HepG2 (cell line): ENCODE measurements at regions of chr11 and their contacts with region 1.

Region 1: DNA sequence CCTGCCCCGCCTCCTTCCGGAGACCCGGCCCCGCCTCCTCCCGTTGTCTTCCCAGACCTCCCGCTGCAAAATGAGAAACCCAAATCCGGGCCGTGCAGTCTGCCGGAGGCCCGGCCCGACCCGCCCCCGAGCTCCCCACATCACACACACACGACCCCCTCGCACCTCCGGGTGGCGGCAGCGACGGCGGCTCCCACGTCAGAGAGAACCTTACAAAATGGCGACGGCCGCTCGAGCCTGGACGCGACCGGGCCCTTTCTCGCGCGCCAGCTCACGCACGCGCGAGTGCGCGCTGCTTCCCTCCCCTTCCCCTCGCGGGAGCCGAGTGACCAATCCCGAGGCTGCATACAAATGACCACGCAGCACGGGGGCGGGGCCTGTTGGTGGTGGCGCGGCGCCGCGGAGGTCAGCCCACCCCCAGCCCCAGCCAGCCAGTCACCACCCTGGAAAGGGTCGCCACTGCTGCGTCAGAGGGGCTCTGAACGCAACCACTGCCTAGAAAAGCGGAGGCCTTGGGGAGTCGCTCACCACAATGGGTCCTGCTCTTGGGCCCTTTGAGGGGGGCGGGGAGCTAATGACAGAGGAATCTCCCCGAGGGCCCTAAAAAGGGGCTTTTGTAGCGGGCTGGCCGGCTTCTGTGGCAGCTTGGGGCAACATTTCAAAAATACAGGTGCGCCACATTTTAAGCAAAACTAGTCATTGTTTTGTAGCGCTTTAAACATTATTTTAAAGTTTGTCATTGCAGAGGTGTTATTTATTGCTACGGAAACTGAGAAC is at the start of gene RBM4B:
- DNase-seq: peak; percentile 93
- ATAC-seq: peak; percentile 96
- H3K4me3 ChIP-seq: peak within 1 kb of the TSS; percentile 60 to 83 (median 82)
- H3K27ac ChIP-seq: peak within 1 kb of the TSS; percentile 87
- H3K4me1 ChIP-seq: peaks cover 40% of the 10 kb centered on the region
- H3K27me3 ChIP-seq: no peaks in the 10 kb centered on the region; a peak in 1 of 5 replicates
- CTCF ChIP-seq: no peak
- EP300 ChIP-seq: 0 out of 4 replicates have a peak, but pooled peaks of 1 of the 2 experiments have one; percentile 7
- POLR2A ChIP-seq: peak; percentile 80 to 95
- RAD21 ChIP-seq: no peak
- total RNA-seq, gene RBM4B: 25.6 and 25.8 TPM in 2 replicates

Region 2: GRCh38 chr11:66438504-66439466 is 239.0 kb before region 1 on chr11 and contains the start of gene MRPL11:
- CTCF ChIA-PET with region 1: interaction called, 5 read pairs
- POLR2A ChIA-PET with region 1: interaction called, 18 read pairs
- in situ Hi-C with region 1: no loop called
- intact Hi-C with region 1: no loop called
- DNase-seq: peak; percentile 92
- ATAC-seq: peak; percentile 94
- H3K4me3 ChIP-seq: peak within 1 kb of the TSS; percentile 78 to 89 (median 84)
- H3K27ac ChIP-seq: peak within 1 kb of the TSS; percentile 88
- H3K4me1 ChIP-seq: peaks cover 33% of the 10 kb centered on the region
- H3K27me3 ChIP-seq: peaks cover 2 to 9% of the 10 kb centered on the region in 2 experiments; a peak in 2 of 5 replicates
- CTCF ChIP-seq: peak; percentile 90
- EP300 ChIP-seq: no peak
- POLR2A ChIP-seq: peak; percentile 67 to 78; a peak in 3 of 4 replicates
- RAD21 ChIP-seq: no peak
- total RNA-seq, gene MRPL11: 176 and 220 TPM in 2 replicates

Region 3: DNA sequence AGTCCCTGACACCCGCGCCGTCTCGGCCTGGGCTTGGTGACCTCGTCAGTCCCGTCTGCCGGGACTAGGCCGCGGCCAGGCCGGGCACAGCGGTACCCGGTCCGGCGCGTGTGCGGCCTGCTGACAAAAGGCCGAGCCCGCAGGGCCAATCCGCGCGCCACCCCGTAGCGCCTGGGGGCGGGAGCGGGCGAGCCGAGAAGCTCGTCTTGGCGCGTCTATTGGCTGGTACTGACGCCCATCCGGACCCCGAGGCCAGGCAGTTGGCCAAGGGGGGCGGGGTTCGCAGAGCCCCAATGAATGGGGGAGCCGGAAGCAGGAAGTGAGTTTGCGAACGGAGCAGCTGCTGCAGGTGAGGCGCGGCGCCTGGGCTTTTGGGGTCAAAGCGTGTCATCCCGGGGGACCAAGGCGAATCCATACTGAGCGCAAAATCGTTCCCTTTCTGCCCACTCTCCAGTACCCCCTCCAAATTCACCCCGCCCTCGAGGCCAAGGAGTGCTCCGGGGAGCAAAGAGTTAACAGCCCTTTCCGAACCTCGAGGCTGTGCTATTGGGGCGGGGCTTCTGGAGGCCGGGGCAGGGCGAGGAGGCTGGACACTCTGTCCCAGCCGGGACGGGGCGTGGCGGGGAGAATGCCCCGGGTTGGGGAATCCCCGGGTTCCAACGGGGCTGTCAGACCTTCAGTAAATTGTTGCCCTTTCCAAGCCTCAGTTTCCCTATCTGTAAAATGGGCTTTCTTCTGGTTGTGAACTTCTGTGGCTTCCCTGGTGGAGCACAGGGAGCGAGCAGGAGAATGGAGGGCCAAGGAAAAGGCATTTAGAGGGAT is 197.5 kb before region 1 on chr11 and contains the start of gene DPP3:
- CTCF ChIA-PET with region 1: no interaction called
- POLR2A ChIA-PET with region 1: interaction called, 21 read pairs
- in situ Hi-C with region 1: no loop called
- intact Hi-C with region 1: no loop called
- DNase-seq: peak; percentile 93
- ATAC-seq: peak; percentile 93
- H3K4me3 ChIP-seq: peak within 1 kb of the TSS; percentile 70 to 93 (median 92)
- H3K27ac ChIP-seq: peak within 1 kb of the TSS; percentile 87
- H3K4me1 ChIP-seq: peaks cover 50% of the 10 kb centered on the region
- H3K27me3 ChIP-seq: no peaks in the 10 kb centered on the region
- CTCF ChIP-seq: peak; percentile 18; the same call in 1 of the 2 replicates
- EP300 ChIP-seq: no peak
- POLR2A ChIP-seq: peak; percentile 85 to 93
- RAD21 ChIP-seq: no peak; the same call in 1 of the 2 replicates
- total RNA-seq, gene DPP3: 48.7 and 59.8 TPM in 2 replicates

Region 4: GRCh38 chr11:66579017-66579606 is 98.7 kb before region 1 on chr11:
- CTCF ChIA-PET with region 1: interaction called, 34 read pairs
- POLR2A ChIA-PET with region 1: interaction called, 9 read pairs
- in situ Hi-C with region 1: no loop called
- intact Hi-C with region 1: loop called (anchors 1 kb)
- DNase-seq: peak; percentile 52
- ATAC-seq: peak; percentile 93
- H3K4me3 ChIP-seq: peak overlapping the region in 1 of 3 experiments; percentile 44; a peak in 2 of 6 replicates
- H3K27ac ChIP-seq: no peak overlapping the region
- H3K4me1 ChIP-seq: peaks cover 18% of the 10 kb centered on the region
- H3K27me3 ChIP-seq: peaks cover 0 to 3% of the 10 kb centered on the region in 2 experiments; a peak in 1 of 5 replicates
- CTCF ChIP-seq: peak; percentile 95
- EP300 ChIP-seq: no peak
- POLR2A ChIP-seq: no peak
- RAD21 ChIP-seq: peak; percentile 93

Region 5: DNA sequence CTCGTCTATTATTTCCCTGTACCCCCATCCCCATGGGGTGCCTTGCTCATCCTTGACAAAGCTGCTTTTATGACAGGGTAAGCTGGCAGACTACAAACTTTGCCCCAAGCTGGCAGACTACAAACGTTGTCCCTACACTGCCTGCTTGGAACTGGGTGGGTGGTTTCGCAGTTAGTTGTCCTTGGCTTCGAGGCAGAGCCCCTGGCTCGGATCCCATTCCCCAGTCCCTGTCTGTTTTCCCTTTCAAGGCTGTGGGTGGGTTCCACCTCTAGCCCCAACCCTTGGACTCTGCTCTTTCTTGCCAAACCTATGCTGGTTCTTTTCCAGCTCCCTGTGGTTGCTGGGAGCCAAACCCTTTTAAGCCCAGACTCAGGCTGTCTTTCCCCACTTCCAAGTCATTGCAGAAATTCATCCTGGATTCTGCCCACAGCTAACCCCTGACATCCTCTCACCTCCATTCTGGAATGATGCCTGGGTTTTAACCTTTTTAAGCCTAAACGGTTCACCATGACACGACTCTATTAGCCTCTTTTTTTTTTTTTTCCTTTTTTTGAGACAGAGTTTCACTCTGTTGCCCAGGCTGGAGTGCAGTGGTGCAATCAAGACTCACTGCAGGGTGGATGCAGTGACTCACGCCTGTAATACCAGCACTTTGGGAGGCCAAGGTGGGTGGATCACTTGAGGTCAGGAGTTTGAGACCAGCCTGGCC is 70.5 kb before region 1 on chr11:
- CTCF ChIA-PET with region 1: no interaction called
- POLR2A ChIA-PET with region 1: interaction called, 11 read pairs
- in situ Hi-C with region 1: no loop called
- intact Hi-C with region 1: no loop called
- DNase-seq: peak; percentile 82
- ATAC-seq: peak; percentile 91
- H3K4me3 ChIP-seq: peak overlapping the region in 1 of 3 experiments; percentile 14; a peak in 2 of 6 replicates
- H3K27ac ChIP-seq: peak overlapping the region; percentile 70
- H3K4me1 ChIP-seq: peaks cover 23% of the 10 kb centered on the region
- H3K27me3 ChIP-seq: no peaks in the 10 kb centered on the region
- CTCF ChIP-seq: no peak
- EP300 ChIP-seq: peak in 1 of 2 experiments; percentile 54; a peak in 1 of 4 replicates
- POLR2A ChIP-seq: no peak
- RAD21 ChIP-seq: 0 out of 2 replicates have a peak, but pooled peaks have one; percentile 12

Region 6: DNA sequence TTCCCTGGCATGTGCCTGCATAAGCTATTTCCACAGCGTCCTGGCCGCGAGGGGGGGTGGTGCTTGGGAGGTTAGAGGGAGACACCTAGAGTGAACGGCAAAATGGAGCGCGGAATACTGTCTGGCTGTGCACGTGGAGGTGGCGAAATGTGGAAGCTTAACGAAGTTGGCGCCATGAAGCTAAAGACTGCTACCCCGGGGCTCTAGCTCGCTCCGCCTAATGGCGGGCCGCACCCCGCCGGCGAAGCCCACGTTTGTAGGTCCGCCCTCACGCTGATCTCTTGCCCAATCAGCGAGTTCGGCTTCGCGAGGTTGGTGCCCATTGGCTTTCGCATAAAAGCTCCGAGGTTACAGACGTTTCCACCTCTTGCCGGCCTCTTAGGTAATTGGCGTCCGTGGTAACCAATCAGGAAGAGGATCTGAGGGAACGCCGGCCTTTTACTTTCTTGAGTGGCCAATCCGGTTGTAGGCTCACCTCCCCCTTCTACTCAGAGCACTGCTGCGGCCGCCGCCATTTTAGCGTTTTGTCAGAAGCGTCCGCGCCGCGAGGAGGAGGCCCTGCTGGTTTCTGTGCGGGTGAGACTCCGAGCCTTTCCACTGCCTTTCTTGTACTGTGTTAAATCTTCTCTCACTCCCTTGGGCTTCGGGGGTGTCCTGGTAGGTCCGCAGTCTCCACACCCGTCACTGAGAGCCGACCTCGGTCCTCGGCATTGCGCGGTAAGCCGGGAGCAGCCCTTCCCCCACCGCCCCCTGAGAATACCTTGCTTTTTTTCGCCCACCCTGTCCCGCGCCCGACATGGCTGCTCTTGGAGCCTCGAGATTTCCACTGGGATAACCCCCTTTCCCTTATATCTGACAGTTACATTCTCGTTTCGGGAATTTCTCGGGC is 39.4 kb before region 1 on chr11 and contains the start of gene RBM4:
- CTCF ChIA-PET with region 1: no interaction called
- POLR2A ChIA-PET with region 1: interaction called, 52 read pairs
- in situ Hi-C with region 1: no loop called
- intact Hi-C with region 1: no loop called
- DNase-seq: peak; percentile 99
- ATAC-seq: peak; percentile 93
- H3K4me3 ChIP-seq: peak within 1 kb of the TSS; percentile 87 to 96 (median 90)
- H3K27ac ChIP-seq: peak within 1 kb of the TSS; percentile 95
- H3K4me1 ChIP-seq: peaks cover 63% of the 10 kb centered on the region
- H3K27me3 ChIP-seq: no peaks in the 10 kb centered on the region; a peak in 1 of 5 replicates
- CTCF ChIP-seq: peak; percentile 29; the same call in 1 of the 2 replicates
- EP300 ChIP-seq: no peak
- POLR2A ChIP-seq: peak; percentile 83 to 94
- RAD21 ChIP-seq: 0 out of 2 replicates have a peak, but pooled peaks have one; percentile 24
- total RNA-seq, gene RBM4: 136 and 138 TPM in 2 replicates